Activated T-helper 1 cell treated with anti-CD3 and anti-CD28 coated beads, Interleukin-12 subunit alpha, Interleukin-12 subunit beta, Interleukin-2, Interleukin-4 antibody, amounts not matched to agents 30 ng/mL and 10 ng/mL and 1 ng/mL, durations not matched to agents 14 hours and 24 hours and 36 hours (primary cell): ENCODE measurements at regions of chr7 and their contacts with region 1.

Region 1: DNA sequence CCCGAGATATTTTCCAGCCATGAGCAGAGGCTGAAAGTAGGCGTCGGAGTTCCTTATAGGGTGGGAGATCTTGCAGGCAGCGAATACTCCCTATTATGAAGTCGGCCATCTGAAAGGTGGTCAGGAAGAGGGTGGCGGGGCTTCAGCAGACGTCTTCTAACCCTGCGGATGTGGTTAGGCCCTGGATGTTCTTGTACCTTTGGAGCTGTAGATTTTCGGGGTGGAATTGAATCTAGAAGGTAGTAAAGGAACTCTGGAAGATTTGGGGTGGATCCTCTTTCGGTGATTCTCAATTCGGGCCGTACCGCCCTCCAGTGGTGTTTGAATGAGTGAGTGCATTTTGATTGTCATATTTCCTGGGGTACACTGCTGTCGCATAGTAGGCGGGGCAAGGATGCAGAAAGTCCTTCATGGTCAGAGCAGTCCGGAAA is 635 bp downstream of the NUP205 start:
- DNase-seq: peak; percentile 60
- H3K4me3 Mint-ChIP-seq: no peak overlapping the region
- H3K27ac Mint-ChIP-seq: no peak overlapping the region
- H3K4me1 Mint-ChIP-seq: peaks cover 16% of the 10 kb centered on the region
- H3K27me3 Mint-ChIP-seq: no peaks in the 10 kb centered on the region

Region 2: DNA sequence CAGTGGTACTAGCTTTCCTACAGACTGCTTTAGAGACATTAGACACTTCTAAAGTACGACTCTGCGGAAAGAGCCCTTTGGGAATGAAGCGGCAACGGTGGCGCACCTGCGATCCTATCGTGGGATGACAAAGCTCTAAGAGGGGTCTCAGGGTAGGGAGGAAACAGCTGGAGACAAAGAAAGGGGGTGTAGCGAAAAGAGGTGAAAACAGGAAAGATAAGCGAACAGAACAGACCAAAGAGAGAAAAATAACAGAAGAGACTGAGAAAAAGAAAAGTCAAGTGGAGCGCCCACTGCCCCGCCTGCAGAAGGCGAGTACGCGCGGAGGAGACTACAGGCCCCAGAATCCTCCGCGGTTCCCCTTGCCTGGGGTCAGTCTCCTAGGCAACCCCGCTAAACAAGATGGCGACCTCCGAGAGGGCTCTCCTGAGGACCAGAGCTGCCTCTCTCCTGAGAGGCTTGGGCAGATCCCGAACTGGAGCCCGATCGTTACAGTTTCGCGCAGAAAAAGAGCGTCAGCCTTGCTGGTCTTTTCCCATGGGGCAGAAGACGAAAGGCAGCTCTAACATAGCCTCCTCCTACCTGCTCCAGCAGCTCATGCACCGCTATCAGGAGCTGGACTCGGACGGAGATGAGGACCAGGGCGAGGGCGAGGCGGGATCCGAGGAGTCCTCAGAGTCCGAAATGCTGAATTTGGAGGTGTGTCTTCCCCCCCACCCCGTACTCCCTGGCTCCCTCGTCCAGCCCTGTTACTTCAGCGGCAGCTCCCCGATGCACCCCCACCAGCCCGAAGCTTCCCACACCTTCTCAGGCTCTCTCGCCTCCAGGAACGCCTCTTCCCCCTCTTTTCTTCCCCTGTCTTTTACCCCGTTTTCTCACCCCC is 1431.1 kb before region 1 on chr7 and contains the start of gene LRGUK:
- intact Hi-C with region 1: loop called (anchors 2 kb)
- DNase-seq: peak; percentile 72
- H3K4me3 Mint-ChIP-seq: peak within 1 kb of the TSS; percentile 88
- H3K27ac Mint-ChIP-seq: peak within 1 kb of the TSS; percentile 42
- H3K4me1 Mint-ChIP-seq: peaks cover 14% of the 10 kb centered on the region
- H3K27me3 Mint-ChIP-seq: peaks cover 19% of the 10 kb centered on the region
- total RNA-seq, gene LRGUK: 0.05 TPM in 1 of 2 replicates, not detected in the other

Region 3: GRCh38 chr7:135147899-135148721 is 410.2 kb before region 1 on chr7 and contains the start of gene TMEM140:
- intact Hi-C with region 1: loop called (anchors 5 kb)
- DNase-seq: peak; percentile 61
- H3K4me3 Mint-ChIP-seq: peak within 1 kb of the TSS; percentile 88
- H3K27ac Mint-ChIP-seq: peak within 1 kb of the TSS; percentile 96
- H3K4me1 Mint-ChIP-seq: peaks cover 60% of the 10 kb centered on the region
- H3K27me3 Mint-ChIP-seq: no peaks in the 10 kb centered on the region
- total RNA-seq, gene TMEM140: 2.9 and 4.5 TPM in 2 replicates

Region 4: DNA sequence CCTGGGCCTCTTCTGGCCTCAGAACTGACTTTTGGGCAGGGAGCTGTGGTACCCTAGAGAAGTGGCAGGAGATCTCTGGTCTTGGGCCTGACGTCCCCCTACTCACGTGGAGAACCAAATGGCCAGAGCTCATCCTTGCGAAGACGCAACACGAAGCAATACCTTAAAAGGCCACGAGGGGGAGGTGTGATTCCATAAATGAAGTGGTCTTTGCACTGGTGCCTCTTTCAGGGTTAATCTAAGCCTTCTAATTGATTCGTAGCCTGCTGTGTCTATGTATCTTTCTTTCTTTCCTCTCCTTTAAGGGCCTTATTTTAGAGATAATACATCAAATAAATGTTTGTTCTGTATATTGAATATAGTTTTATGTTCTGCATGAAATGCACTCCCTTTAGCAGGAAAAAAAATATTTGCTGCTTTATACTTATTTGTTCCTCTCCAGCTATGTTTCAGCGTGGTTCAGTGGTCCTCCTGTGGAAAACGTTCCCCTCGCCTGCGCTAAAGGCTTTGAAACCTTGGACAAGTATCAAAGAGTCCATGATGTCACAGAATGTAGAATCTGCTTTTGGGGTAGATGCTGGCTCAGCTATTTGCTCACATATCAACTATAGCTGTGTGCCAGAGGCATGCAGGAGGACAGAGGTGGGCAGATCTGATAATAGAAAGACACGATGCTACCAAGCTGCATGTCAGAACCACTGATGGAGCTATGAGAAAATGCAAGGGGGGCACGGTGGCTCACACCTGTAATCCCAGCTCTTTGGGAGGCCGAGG is 283.7 kb before region 1 on chr7:
- intact Hi-C with region 1: loop called (anchors 1 kb)
- DNase-seq: peak; percentile 57
- H3K4me3 Mint-ChIP-seq: no peak overlapping the region
- H3K27ac Mint-ChIP-seq: no peak overlapping the region
- H3K4me1 Mint-ChIP-seq: no peaks in the 10 kb centered on the region
- H3K27me3 Mint-ChIP-seq: peaks cover 2% of the 10 kb centered on the region

Region 5: GRCh38 chr7:135414850-135415439 is 143.4 kb before region 1 on chr7:
- intact Hi-C with region 1: loop called (anchors 2 kb)
- DNase-seq: no peak
- H3K4me3 Mint-ChIP-seq: no peak overlapping the region
- H3K27ac Mint-ChIP-seq: no peak overlapping the region
- H3K4me1 Mint-ChIP-seq: peaks cover 6% of the 10 kb centered on the region
- H3K27me3 Mint-ChIP-seq: no peaks in the 10 kb centered on the region

Region 6: GRCh38 chr7:135886345-135887132 is 328.2 kb after region 1 on chr7:
- intact Hi-C with region 1: no loop called
- DNase-seq: no peak
- H3K4me3 Mint-ChIP-seq: no peak overlapping the region
- H3K27ac Mint-ChIP-seq: no peak overlapping the region
- H3K4me1 Mint-ChIP-seq: no peaks in the 10 kb centered on the region
- H3K27me3 Mint-ChIP-seq: no peaks in the 10 kb centered on the region

Region 7: GRCh38 chr7:135977007-135977741 is 418.8 kb after region 1 on chr7 and contains the start of gene MTPN:
- intact Hi-C with region 1: loop called (anchors 1 kb)
- DNase-seq: peak; percentile 98
- H3K4me3 Mint-ChIP-seq: peak within 1 kb of the TSS; percentile 98
- H3K27ac Mint-ChIP-seq: peak within 1 kb of the TSS; percentile 88
- H3K4me1 Mint-ChIP-seq: peaks cover 75% of the 10 kb centered on the region
- H3K27me3 Mint-ChIP-seq: peaks cover 2% of the 10 kb centered on the region
- total RNA-seq, gene MTPN: 117 and 119 TPM in 2 replicates